HCT116 (cell line): ENCODE measurements at regions of chr10 and their contacts with region 1.

Region 1: GRCh38 chr10:32378363-32379317 is 31.7 kb upstream of the EPC1 start:
- DNase-seq: peak; percentile 79
- ATAC-seq: peak; percentile 94
- H3K4me3 ChIP-seq: peak overlapping the region; percentile 62 to 75
- H3K27ac ChIP-seq: peak overlapping the region; percentile 62
- H3K4me1 ChIP-seq: peaks cover 14 to 34% of the 10 kb centered on the region in 2 experiments; a peak in 3 of 4 replicates
- H3K27me3 ChIP-seq: no peaks in the 10 kb centered on the region
- CTCF ChIP-seq: no peak
- POLR2A ChIP-seq: peak; percentile 62
- RAD21 ChIP-seq: no peak

Region 2: DNA sequence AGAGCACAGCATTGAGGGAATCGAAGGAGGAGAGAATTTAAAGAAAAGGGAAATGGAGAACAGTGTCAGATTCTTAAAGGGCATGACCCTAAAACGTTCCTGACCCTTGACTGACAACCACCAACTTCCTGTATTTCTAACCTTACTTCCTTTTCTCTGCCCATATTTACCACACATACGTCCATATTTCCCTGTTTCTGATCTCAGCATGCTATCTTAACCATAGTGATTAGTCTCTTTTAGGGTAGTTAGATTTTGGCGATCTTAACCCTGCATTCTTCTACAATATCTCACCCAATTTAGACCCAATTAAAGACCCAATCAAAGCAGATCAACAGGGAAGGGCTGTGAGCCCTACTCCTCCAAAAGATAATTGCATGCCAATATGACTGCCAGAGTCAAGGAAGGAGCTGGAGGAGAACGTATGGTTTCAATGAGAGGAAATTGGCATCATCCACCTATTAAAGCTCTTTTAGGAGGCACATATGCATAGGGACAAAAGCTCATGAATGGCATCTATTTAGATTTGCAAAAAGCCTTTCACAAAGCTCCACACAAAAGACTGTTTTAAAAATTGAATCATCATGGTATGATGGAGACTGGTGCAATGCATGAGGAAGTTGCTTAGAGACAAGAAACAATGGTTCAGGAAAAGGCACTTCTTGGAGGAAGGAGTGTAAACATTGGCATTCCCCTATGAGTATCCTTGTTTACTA is 401.0 kb before region 1 on chr10:
- CTCF ChIA-PET with region 1: no interaction called
- POLR2A ChIA-PET with region 1: no interaction called
- RAD21 ChIA-PET with region 1: no interaction called
- intact Hi-C with region 1: no loop called
- DNase-seq: no peak
- ATAC-seq: no peak
- H3K4me3 ChIP-seq: no peak overlapping the region
- H3K27ac ChIP-seq: no peak overlapping the region
- H3K4me1 ChIP-seq: peaks cover 3 to 18% of the 10 kb centered on the region in 2 experiments
- H3K27me3 ChIP-seq: no peaks in the 10 kb centered on the region
- CTCF ChIP-seq: no peak
- POLR2A ChIP-seq: no peak
- RAD21 ChIP-seq: no peak

Region 3: DNA sequence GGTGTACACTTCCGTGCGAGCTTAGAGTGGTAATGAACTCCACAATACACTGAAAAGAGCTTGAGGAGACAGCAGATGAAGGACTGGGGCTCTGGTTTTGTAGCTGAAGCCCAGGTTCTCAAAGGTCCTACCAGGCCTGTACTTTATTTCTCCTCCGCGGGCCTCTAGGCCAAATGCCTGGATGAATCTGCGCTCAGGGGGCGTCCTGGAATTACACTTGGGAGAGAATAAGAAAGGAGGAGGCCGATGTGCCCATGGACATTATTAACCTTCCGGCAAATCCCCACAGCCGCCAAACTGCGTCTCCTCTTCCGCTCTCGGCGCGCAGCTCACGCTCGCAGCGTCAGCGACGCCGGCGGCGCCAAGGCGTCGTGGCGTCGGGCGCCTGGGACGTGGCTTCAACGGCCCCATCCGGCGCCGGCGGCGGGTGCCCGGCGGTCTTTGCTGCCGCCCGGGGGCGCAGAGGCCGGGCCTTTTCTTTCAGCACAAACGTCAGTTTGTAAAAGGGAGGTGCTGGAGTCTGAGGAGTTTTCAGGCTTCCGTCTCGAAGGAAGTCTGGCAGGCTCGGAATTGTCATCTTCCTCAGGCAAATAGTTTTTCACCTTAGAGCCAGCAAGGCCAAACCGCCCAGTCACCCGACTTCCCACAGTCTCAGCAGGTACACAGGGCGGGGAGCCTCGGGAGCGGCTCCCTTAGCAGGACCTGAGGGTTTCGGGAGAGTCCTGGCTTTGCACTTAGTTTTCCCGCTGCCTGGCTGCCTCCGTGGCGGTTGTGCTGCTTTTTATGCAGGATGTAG is 67.3 kb after region 1 on chr10 and contains the start of gene CCDC7:
- CTCF ChIA-PET with region 1: no interaction called
- POLR2A ChIA-PET with region 1: no interaction called
- RAD21 ChIA-PET with region 1: no interaction called
- intact Hi-C with region 1: loop called (anchors 5 kb)
- DNase-seq: peak; percentile 67
- ATAC-seq: peak; percentile 97
- H3K4me3 ChIP-seq: peak within 1 kb of the TSS; percentile 66 to 70
- H3K27ac ChIP-seq: peak within 1 kb of the TSS; percentile 87
- H3K4me1 ChIP-seq: peaks cover 8 to 11% of the 10 kb centered on the region in 2 experiments
- H3K27me3 ChIP-seq: no peaks in the 10 kb centered on the region
- CTCF ChIP-seq: peak in 2 of 3 experiments; percentile 9 to 44; a peak in 2 of 6 replicates
- POLR2A ChIP-seq: peak; percentile 84
- RAD21 ChIP-seq: peak; percentile 49
- total RNA-seq, gene CCDC7: 4.0 TPM